Aorta (tissue), 5 donors: ENCODE measurements at regions of chr5 and their contacts with region 1.

Region 1: GRCh38 chr5:133868946-133869518 is 99.4 kb downstream of the C5orf15 start:
- DNase-seq: peak; percentile 86 to 92
- ATAC-seq: peak; percentile 79
- H3K4me3 ChIP-seq: no peak overlapping the region
- H3K27ac ChIP-seq: no peak overlapping the region
- H3K4me1 ChIP-seq: no peaks in the 10 kb centered on the region
- H3K27me3 ChIP-seq: no peaks in the 10 kb centered on the region

Region 2: GRCh38 chr5:133111299-133111698 is 757.7 kb before region 1 on chr5:
- intact Hi-C with region 1: loop called in 1 of 2 experiments (anchors 10 kb)
- DNase-seq: peak; percentile 90 to 97
- ATAC-seq: peak; percentile 90
- H3K4me3 ChIP-seq: no peak overlapping the region
- H3K27ac ChIP-seq: no peak overlapping the region
- H3K4me1 ChIP-seq: no peaks in the 10 kb centered on the region
- H3K27me3 ChIP-seq: no peaks in the 10 kb centered on the region

Region 3: DNA sequence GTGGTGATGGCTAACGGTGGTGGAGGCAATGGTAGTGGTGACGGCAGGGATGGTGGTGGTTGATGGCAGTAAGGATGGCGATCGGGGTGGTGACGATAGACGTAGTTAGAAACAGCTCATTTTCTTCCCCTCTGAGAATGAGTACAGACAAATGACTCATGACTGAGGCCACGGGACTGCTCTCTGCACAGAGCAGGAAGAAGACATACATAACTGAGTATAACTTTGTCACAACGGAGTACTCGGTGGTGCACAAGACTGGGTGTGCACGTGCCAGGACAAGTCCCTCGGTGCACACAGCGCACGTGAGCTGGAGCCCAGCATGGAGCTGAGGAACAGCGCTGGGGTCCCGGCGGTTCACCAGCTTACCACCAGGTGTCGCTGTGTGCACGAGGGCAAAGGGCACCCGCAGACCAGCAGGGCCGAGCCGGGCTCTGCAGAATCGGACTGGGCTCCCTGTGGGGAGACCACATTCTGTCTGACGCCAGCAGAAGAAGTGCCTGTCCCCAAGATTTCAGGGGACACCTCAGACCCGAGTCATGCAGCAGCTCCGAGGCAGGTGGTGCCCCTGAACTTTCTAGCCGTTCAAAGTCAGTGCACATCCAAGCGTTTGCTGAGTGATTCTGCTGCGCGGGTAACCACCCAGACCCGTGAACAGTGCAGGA is 445.3 kb before region 1 on chr5:
- intact Hi-C with region 1: loop called (anchors 10 kb)
- DNase-seq: peak; percentile 62 to 91
- ATAC-seq: peak; percentile 77
- H3K4me3 ChIP-seq: no peak overlapping the region
- H3K27ac ChIP-seq: no peak overlapping the region
- H3K4me1 ChIP-seq: no peaks in the 10 kb centered on the region
- H3K27me3 ChIP-seq: no peaks in the 10 kb centered on the region

Region 4: DNA sequence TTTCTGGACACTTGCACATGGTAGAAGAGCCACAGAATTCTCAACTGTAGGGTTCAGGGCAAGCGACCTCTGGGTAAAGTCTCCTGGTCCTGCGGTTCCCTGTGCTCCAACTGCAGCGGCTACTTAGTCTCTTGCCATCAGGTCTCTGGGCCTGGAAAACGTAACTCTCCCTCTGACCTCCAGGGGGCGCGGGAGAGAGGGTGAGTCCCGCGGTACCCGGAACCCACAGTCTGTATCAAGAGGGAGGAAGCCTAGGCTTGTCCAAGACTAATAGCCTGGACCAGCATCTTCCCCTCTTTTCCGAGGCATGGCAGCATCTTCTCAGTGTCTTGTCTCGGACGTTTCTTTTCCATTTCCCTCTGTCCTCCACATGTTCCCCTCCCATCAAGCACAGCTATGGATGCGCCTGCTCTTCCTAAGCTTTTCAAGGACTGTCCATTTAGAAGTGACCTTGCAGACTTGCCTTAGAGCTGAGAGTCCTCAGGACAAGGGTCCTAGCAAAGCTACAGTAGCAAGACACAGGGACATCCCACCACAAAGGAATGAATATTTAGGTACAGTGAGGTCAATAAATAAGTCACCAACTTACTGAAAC is 316.0 kb before region 1 on chr5:
- intact Hi-C with region 1: loop called in 1 of 2 experiments (anchors 1 kb)
- DNase-seq: peak; percentile 60 to 78
- ATAC-seq: peak; percentile 73
- H3K4me3 ChIP-seq: no peak overlapping the region
- H3K27ac ChIP-seq: no peak overlapping the region
- H3K4me1 ChIP-seq: no peaks in the 10 kb centered on the region
- H3K27me3 ChIP-seq: peaks cover 0 to 2% of the 10 kb centered on the region in 2 donors

Region 5: DNA sequence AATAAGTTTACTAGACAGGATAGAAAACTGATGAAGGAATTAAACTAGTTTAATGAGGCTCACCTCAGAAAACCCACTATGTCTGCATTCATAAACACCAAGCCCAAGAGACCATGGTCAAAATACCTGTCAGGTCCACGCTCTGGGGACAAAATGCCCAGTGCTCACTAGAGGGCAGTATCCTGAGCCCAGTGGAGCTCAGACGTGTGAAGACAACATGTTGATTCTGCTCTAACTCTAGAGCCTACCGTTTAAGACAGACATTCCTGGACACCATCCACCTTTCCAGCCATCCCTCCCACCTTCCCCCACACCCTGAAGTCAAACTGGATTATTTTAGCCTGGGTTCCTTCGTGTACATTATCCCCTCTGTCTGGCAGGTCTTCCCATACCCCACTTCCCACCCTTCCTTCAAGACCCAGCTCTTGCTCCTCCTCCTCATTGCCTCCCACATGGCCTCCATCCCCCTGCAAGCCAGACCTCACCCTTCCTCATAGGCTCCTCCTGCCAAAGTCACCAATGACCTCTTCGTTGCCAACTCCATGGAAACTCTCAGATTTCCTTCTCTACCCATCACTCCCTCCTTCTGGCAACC is 114.4 kb before region 1 on chr5:
- intact Hi-C with region 1: loop called (anchors 5 to 10 kb)
- DNase-seq: no peak
- ATAC-seq: no peak
- H3K4me3 ChIP-seq: no peak overlapping the region
- H3K27ac ChIP-seq: no peak overlapping the region
- H3K4me1 ChIP-seq: no peaks in the 10 kb centered on the region
- H3K27me3 ChIP-seq: no peaks in the 10 kb centered on the region

Region 6: DNA sequence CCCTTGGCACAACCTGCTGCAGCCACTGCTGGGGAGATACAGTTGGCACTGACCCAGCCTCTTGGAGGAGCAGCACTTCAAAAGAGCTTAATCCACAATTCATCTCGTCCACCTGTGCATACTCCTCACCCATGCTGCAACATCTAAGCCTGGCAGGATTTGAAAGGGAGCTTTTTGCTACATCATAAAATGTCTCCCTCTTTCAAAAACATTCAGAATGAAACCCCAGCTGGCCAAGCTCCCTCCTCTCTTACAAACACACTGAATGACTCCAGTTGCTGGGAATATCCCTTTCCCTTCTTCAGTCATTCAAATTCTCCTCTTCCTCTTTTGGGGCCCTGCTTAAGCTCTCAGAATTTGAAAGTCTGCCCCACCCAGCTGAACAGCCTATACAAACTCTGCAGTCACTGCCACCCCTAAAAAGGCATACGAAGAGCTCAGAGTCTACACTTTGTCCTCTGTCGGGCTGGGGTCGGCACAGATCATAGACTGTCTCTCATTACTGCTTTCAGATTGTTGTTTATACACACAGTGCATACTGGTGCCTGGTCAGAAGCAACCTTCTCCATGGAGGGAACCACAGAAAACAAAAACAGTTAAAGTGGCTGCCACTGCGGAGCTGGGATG is 108.2 kb after region 1 on chr5:
- intact Hi-C with region 1: loop called in 1 of 2 experiments (anchors 10 kb)
- DNase-seq: no peak
- ATAC-seq: no peak
- H3K4me3 ChIP-seq: no peak overlapping the region
- H3K27ac ChIP-seq: no peak overlapping the region
- H3K4me1 ChIP-seq: no peaks in the 10 kb centered on the region
- H3K27me3 ChIP-seq: no peaks in the 10 kb centered on the region